Dorsolateral prefrontal cortex (tissue), 120 donors: ENCODE measurements at regions of chr3 and their contacts with region 1.

Region 1: DNA sequence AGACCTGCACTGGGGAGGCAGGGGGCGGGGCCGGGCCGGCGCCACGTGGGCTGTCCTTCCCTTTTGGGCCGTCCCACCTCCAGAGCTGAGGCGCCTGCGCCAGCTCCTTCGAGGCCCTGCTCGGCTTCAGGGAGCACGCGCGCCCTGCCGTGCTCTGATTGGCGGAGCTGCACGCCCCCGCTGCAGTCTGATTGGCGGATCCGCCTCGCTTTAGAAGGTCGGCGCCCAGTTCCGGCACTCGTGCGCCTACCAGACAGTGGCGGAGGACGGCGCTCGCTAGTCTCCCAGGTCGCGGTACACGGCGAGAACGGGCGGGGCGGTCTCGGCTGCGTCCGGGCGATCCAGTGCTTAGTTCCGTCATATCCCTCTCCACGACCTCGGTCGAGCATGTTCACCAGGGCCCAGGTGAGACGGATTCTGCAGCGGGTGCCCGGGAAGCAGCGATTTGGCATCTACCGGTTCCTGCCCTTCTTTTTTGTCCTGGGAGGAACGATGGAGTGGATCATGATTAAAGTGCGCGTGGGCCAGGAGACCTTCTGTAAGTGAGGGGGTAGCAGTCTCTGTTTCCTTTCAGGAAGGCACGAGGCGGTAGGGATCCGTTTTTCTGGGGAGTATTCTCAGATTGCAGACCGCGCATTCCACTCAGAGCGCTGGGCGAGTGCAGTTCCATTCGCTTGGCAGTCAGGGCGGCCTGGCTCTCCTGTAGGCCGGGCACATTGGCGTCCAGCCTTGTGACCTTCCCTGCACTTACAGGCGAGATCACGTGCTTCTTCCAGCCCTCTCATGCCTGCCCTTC is at the start of gene UQCC5:
- DNase-seq: peak; percentile 95 to 98 (median 96)
- H3K4me3 ChIP-seq: peak within 1 kb of the TSS; percentile 50 to 97 (median 84)
- H3K27ac ChIP-seq: peak within 1 kb of the TSS in 56 of 59 donors; percentile 10 to 92 (median 83)
- H3K27me3 ChIP-seq: no peaks in the 10 kb centered on the region
- CTCF ChIP-seq: peak in 42 of 56 donors; percentile 4 to 63 (median 36)
- total RNA-seq, gene UQCC5: 4.8 to 19.1 (median 10.9) TPM

Region 2: DNA sequence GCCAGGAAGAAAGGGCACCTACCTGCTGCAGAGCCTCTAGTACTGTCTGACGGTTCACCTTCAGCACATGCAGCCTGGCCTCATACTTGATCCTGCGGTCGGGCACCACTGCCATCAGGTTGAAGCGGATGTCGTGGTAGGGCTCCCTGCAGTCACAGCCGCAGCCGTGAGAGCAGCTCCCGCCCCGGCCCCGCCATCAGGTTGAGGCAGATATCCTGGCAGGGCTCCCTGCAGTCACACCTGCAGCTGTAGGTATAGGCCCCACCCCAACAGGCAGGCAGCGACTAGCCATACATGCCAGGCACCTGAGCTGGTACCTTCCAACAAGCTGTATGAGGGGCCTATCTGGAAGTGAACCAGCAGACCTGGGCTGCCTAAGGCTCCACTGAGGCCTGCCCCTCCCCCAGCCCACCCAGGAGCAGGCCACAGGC is 130.3 kb before region 1 on chr3:
- intact Hi-C with region 1: loop called in 1 of 2 experiments (anchors 5 kb)
- DNase-seq: peak in 2 of 10 donors; percentile 26 to 31
- H3K4me3 ChIP-seq: no peak overlapping the region
- H3K27ac ChIP-seq: no peak overlapping the region
- H3K27me3 ChIP-seq: no peaks in the 10 kb centered on the region
- CTCF ChIP-seq: no peak

Region 3: GRCh38 chr3:52444860-52445793 is 91.4 kb before region 1 on chr3 and contains the start of gene SEMA3G:
- intact Hi-C with region 1: no loop called
- DNase-seq: peak in 1 of 10 donors; percentile 94
- H3K4me3 ChIP-seq: peak within 1 kb of the TSS in 25 of 59 donors; percentile 8 to 50 (median 35)
- H3K27ac ChIP-seq: peak within 1 kb of the TSS in 2 of 59 donors; percentile 18 to 64
- H3K27me3 ChIP-seq: no peaks in the 10 kb centered on the region
- CTCF ChIP-seq: peak in 40 of 56 donors; percentile 11 to 47 (median 26)
- total RNA-seq, gene SEMA3G: 1.6 to 23.6 (median 7.0) TPM

Region 4: GRCh38 chr3:52471371-52472238 is 65.0 kb before region 1 on chr3:
- intact Hi-C with region 1: loop called (anchors 5 to 10 kb)
- DNase-seq: peak in 7 of 10 donors; percentile 54 to 75 (median 72)
- H3K4me3 ChIP-seq: no peak overlapping the region
- H3K27ac ChIP-seq: peak overlapping the region in 50 of 59 donors; percentile 0 to 96 (median 56)
- H3K27me3 ChIP-seq: no peaks in the 10 kb centered on the region
- CTCF ChIP-seq: peak; percentile 46 to 86 (median 72)

Region 5: DNA sequence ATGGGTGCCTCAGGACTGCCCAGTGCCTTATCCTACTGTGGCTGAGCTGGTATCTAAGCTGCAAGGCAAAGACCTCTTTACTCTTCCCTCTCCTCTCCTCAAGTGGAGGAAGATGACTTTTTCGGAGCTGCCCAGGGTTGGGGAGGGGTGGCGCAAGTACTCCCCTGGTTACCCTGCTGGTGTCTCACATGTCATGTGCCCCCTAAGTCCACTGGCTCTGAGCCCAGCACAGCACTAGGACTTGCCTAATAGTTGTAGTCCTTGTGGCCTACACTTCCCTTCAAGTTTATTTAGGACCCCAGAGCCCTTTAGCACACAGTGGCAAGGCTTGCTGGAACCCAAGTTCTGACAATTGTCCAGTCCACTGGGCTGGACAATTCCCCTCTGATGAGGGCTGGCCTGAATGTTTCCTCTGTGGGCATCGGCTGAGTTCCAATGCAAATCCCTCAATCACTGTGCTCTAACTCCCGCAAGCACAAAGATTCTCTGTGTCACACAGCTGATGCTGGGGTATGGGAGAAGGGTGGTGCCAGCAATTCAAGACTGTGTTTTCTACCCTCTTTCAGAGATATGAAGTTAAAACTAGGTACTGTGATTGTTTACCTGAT is 60.2 kb after region 1 on chr3:
- intact Hi-C with region 1: loop called (anchors 2 kb)
- DNase-seq: peak; percentile 19 to 87 (median 80)
- H3K4me3 ChIP-seq: peak overlapping the region in 17 of 59 donors; percentile 2 to 46 (median 16)
- H3K27ac ChIP-seq: peak overlapping the region; percentile 53 to 97 (median 91)
- H3K27me3 ChIP-seq: no peaks in the 10 kb centered on the region
- CTCF ChIP-seq: peak in 16 of 56 donors; percentile 7 to 39 (median 20)

Region 6: DNA sequence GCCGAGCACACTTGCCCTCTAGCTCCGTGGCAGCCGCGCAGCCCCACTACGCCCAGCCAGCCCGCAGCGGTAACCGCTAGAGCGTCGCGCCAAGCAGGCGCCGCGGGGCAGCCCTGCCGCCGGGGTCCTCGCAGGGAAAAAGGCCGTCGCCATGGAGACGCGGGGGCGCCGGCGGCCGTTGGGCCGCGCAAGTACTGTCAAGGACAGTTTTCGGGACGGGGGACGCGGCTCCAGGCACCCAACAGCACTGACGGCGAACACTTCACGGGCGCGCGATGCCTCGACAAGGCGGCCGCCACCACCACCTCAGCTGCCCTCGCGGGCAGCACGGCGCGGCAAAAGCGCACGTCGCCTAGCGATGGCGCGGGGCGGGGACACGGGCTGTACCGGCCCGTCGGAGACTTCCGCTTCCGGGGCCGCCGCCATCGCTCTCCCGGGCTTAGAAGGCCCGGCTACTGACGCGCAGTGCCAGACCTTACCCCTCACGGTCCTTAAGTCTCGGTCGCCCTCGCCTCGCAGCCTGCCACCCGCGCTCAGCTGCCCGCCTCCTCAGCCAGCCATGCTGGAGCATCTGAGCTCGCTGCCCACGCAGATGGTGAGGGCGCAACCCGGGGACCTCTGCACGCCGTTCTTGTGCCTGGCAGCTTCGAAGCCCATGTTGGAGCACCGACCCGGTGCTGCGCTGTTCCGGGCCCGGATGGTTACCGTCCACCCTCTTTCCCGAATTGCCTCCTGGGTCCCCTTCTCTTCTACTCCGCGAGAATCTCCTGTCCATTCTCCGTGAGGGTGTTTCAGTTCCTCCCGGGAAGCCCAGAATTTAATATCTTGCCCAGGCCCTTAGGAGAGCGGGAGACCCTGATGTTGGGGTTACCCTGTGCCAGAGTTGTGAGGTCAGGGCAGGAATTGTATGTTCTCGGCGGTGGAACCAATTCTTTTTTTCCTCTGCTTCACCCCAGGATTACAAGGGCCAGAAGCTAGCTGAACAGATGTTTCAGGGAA is 169.4 kb after region 1 on chr3 and contains the starts of genes GLT8D1 and SPCS1:
- intact Hi-C with region 1: loop called in 1 of 2 experiments (anchors 5 kb)
- DNase-seq: peak; percentile 77 to 93 (median 87)
- H3K4me3 ChIP-seq: peak within 1 kb of the TSS; percentile 48 to 100 (median 96)
- H3K27ac ChIP-seq: peak within 1 kb of the TSS; percentile 24 to 96 (median 90)
- H3K27me3 ChIP-seq: no peaks in the 10 kb centered on the region
- CTCF ChIP-seq: peak in 29 of 56 donors; percentile 2 to 59 (median 27)
- total RNA-seq, gene GLT8D1: 31.5 to 63.2 (median 47.2) TPM
- total RNA-seq, gene SPCS1: 50.3 to 110 (median 78.8) TPM